Heart left ventricle (tissue), 16 donors: ENCODE measurements at regions of chr15 and their contacts with region 1.

Region 1: DNA sequence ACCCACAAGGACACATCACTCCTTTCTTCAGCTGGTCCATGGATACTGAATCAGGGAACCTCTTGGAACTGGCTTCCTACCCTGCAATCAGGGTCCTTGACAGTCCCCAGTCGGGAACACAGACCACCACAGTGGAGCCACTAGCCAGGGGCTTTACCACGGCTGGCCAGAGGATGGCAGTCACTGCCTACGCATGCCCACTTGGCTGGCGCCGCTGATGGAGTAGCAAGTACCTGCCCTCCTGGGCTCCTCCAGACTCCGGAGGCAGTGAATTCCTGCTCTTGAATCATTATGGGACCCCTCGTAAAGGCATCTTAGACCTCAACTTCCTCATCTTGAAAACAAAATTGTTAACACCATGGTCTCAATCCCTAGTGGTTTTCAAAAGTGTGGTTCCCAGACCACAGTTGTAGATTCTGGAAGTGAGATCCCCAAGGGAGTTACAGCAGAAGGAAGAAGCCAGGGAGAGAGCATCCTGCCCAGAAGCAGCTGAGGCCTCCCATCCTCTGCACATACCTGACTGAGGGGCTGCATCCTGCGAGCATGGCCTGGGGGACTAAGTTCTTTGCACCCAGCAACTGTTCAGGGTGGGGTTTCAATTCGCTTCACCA is 9.1 kb upstream of the SKIC8 start:
- DNase-seq: peak; percentile 54 to 83 (median 64)
- ATAC-seq: peak; percentile 68 to 91 (median 87)
- H3K4me3 ChIP-seq: no peak overlapping the region
- H3K27ac ChIP-seq: no peak overlapping the region
- H3K4me1 ChIP-seq: peaks cover 0 to 8% (median 0%) of the 10 kb centered on the region in 12 donors
- H3K27me3 ChIP-seq: peaks cover 0 to 23% (median 0%) of the 10 kb centered on the region in 9 donors
- CTCF ChIP-seq: peak; percentile 69 to 84 (median 77)
- POLR2A ChIP-seq: no peak

Region 2: GRCh38 chr15:78415286-78415685 is 106.8 kb after region 1 on chr15:
- intact Hi-C with region 1: loop called in 4 of 10 experiments (anchors 2 to 5 kb)
- DNase-seq: no peak
- ATAC-seq: no peak
- H3K4me3 ChIP-seq: no peak overlapping the region
- H3K27ac ChIP-seq: no peak overlapping the region
- H3K4me1 ChIP-seq: no peaks in the 10 kb centered on the region
- H3K27me3 ChIP-seq: peaks cover 0 to 5% (median 0%) of the 10 kb centered on the region in 9 donors
- CTCF ChIP-seq: peak in 3 of 12 donors; percentile 9 to 30 (median 17)
- POLR2A ChIP-seq: no peak

Region 3: GRCh38 chr15:78422571-78423340 is 114.2 kb after region 1 on chr15:
- intact Hi-C with region 1: loop called (anchors 1 to 5 kb)
- DNase-seq: peak; percentile 39 to 67 (median 57)
- ATAC-seq: peak in 3 of 4 donors; percentile 53 to 75 (median 74)
- H3K4me3 ChIP-seq: no peak overlapping the region
- H3K27ac ChIP-seq: no peak overlapping the region
- H3K4me1 ChIP-seq: peaks cover 0 to 11% (median 0%) of the 10 kb centered on the region in 12 donors
- H3K27me3 ChIP-seq: no peaks in the 10 kb centered on the region
- CTCF ChIP-seq: peak; percentile 88 to 96 (median 93)
- POLR2A ChIP-seq: no peak

Region 4: DNA sequence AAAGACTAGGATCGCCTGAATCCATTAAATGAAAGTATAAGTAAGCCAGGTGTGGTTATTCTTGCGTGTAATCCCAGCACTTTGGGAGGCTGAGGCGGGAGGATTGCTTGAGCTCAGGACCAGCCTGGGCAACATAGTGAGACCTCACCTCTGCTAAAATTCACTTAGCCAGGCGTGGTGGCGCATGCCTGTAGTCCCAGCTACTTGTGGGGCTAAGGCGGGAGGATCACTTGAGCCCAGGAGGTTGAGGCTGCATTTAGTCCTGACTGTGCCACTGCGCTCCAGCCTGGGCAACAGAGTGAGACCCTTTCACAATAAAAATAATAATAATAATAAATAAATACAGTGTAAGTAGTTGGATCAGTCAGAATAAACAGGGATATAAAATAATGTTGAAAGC is 173.4 kb after region 1 on chr15:
- intact Hi-C with region 1: loop called in 7 of 10 experiments (anchors 1 to 10 kb)
- DNase-seq: no peak
- ATAC-seq: no peak
- H3K4me3 ChIP-seq: no peak overlapping the region
- H3K27ac ChIP-seq: no peak overlapping the region
- H3K4me1 ChIP-seq: peaks cover 0 to 7% (median 0%) of the 10 kb centered on the region in 12 donors
- H3K27me3 ChIP-seq: no peaks in the 10 kb centered on the region
- CTCF ChIP-seq: no peak
- POLR2A ChIP-seq: no peak